Prostate gland (tissue), 2 donors: ENCODE measurements at regions of chr2 and their contacts with region 1.

Region 1: GRCh38 chr2:23926750-23927571 is at the start of gene ATAD2B:
- DNase-seq: peak; percentile 91
- H3K4me3 ChIP-seq: peak within 1 kb of the TSS; percentile 78 to 81
- H3K27ac ChIP-seq: peak within 1 kb of the TSS; percentile 93 to 98
- H3K4me1 ChIP-seq: peaks cover 4% of the 10 kb centered on the region
- H3K27me3 ChIP-seq: no peaks in the 10 kb centered on the region
- CTCF ChIP-seq: peak; percentile 77 to 97 (median 90)
- POLR2A ChIP-seq: peak; percentile 85
- total RNA-seq, gene ATAD2B: 12.2 to 16.9 TPM

Region 2: GRCh38 chr2:23824777-23825212 is 102.2 kb before region 1 on chr2:
- intact Hi-C with region 1: loop called (anchors 10 kb)
- DNase-seq: peak; percentile 25
- H3K4me3 ChIP-seq: no peak overlapping the region
- H3K27ac ChIP-seq: no peak overlapping the region
- H3K4me1 ChIP-seq: no peaks in the 10 kb centered on the region
- H3K27me3 ChIP-seq: no peaks in the 10 kb centered on the region
- CTCF ChIP-seq: peak; percentile 21 to 72 (median 63)
- POLR2A ChIP-seq: no peak

Region 3: DNA sequence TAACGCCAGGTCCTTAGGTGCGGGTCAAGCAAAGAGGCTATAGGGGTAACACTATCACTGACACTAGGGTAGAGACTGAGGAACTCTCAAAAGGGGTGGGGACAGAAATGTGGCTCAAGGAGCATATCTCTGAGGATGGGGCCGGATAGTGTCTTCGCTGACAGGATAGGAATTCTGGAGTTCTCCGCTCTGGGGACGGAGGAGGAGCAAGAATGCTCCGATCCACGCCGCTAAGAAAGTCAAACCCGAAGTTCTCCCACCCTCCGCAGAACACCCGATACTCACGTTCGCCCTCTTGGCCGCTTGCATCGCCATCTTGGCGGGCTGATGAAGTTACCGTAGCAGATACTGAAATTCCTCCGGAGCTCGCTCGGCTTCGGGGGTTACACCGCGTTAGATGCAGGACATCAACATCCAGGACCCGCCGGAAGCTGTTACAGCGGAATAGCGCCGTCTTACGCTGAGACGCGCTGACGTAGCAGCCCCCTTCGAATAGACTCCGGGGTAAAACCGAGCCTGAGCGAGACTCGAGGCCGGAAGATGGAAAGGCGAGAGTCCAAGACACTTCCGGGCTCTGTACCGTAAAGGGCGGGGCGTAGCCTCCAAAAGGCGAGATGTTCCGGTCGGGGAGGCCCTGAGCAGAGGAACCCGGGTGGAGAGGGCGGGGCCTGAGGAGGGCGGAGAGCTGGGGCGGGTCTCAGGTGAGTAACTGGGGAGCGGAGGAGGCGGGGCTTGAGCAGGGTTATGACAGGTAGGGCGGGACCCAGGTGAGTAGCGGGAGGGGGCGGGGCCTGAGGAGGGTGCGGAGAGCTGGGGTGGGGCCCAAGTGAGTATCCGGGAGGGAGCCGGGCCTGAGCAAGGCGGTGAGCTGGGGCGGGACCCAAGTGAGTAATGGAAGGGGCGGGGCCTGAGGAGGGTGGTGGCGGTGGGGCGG is 149.2 kb after region 1 on chr2 and contains the start of gene SF3B6:
- intact Hi-C with region 1: loop called (anchors 2 kb)
- DNase-seq: peak; percentile 100
- H3K4me3 ChIP-seq: peak within 1 kb of the TSS; percentile 53 to 55
- H3K27ac ChIP-seq: peak within 1 kb of the TSS; percentile 98
- H3K4me1 ChIP-seq: no peaks in the 10 kb centered on the region
- H3K27me3 ChIP-seq: no peaks in the 10 kb centered on the region
- CTCF ChIP-seq: peak in 1 of 4 experiments; percentile 26
- POLR2A ChIP-seq: peak; percentile 75
- total RNA-seq, gene SF3B6: 78.9 to 79.3 TPM